Activated B cell treated with CpG ODN at 0.5 μM for 24 hours (primary cell): ENCODE measurements at regions of chr4 and their contacts with region 1.

Region 1: DNA sequence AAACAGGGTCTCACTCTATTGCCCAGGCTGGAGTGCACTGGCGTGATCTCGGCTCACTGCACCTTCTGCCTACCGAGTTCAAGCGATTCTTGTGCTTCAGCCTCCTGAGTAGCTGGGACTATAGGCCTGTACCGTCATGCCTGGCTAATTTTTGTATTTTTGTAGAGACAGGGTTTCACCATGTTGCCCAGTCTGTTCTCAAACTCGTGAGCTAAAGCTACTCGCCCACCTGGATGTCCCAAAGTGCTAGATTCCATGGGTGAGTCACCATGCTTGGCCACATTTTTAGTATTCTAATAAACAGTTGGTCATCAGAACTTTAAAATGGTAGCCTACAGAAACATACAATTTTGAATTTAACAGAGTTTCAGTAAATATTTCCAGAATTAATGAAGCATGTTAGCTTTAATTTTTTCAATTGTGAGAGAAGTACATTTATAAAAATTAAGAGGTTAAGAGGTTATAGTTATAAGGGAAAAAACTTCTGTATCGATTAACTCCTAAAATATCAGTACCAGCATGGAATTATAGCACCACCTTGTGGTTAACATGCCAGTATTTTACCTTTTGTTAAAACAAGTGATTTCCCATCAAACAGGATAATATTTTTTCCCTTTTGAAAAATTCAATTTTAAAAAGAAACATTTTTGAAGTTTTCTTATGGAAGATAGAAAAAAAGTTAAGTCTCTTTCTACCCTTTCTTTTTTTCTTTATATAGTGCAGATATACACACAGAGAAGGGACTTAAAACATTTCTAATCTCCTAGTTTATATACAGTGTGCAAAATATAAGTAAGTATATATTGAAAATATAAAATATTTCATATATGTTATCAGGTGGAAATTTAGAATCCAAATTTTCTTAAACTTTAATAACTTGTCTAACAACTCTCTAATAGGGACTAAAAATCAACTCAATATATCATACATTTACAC is 35.4 kb downstream of the CEP44 start:
- DNase-seq: no peak
- ATAC-seq: no peak
- H3K4me3 Mint-ChIP-seq: no peak overlapping the region
- H3K27ac Mint-ChIP-seq: no peak overlapping the region
- H3K4me1 Mint-ChIP-seq: no peaks in the 10 kb centered on the region
- H3K27me3 Mint-ChIP-seq: no peaks in the 10 kb centered on the region
- CTCF ChIP-seq: no peak

Region 2: GRCh38 chr4:174069848-174070330 is 249.2 kb before region 1 on chr4:
- CTCF ChIA-PET with region 1: no interaction called
- POLR2A ChIA-PET with region 1: no interaction called
- intact Hi-C with region 1: no loop called
- DNase-seq: no peak
- ATAC-seq: no peak
- H3K4me3 Mint-ChIP-seq: no peak overlapping the region
- H3K27ac Mint-ChIP-seq: no peak overlapping the region
- H3K4me1 Mint-ChIP-seq: no peaks in the 10 kb centered on the region
- H3K27me3 Mint-ChIP-seq: no peaks in the 10 kb centered on the region
- CTCF ChIP-seq: no peak

Region 3: GRCh38 chr4:174222266-174222872 is 96.7 kb before region 1 on chr4:
- CTCF ChIA-PET with region 1: interaction called, 8 read pairs
- POLR2A ChIA-PET with region 1: no interaction called
- intact Hi-C with region 1: loop called (anchors 1 kb)
- DNase-seq: no peak
- ATAC-seq: no peak
- H3K4me3 Mint-ChIP-seq: no peak overlapping the region
- H3K27ac Mint-ChIP-seq: no peak overlapping the region
- H3K4me1 Mint-ChIP-seq: peaks cover 9% of the 10 kb centered on the region
- H3K27me3 Mint-ChIP-seq: peaks cover 39% of the 10 kb centered on the region
- CTCF ChIP-seq: no peak

Region 4: GRCh38 chr4:174265916-174266315 is 53.2 kb before region 1 on chr4:
- CTCF ChIA-PET with region 1: no interaction called
- POLR2A ChIA-PET with region 1: no interaction called
- intact Hi-C with region 1: no loop called
- DNase-seq: no peak
- ATAC-seq: no peak
- H3K4me3 Mint-ChIP-seq: no peak overlapping the region
- H3K27ac Mint-ChIP-seq: no peak overlapping the region
- H3K4me1 Mint-ChIP-seq: peaks cover 14% of the 10 kb centered on the region
- H3K27me3 Mint-ChIP-seq: no peaks in the 10 kb centered on the region
- CTCF ChIP-seq: no peak

Region 5: DNA sequence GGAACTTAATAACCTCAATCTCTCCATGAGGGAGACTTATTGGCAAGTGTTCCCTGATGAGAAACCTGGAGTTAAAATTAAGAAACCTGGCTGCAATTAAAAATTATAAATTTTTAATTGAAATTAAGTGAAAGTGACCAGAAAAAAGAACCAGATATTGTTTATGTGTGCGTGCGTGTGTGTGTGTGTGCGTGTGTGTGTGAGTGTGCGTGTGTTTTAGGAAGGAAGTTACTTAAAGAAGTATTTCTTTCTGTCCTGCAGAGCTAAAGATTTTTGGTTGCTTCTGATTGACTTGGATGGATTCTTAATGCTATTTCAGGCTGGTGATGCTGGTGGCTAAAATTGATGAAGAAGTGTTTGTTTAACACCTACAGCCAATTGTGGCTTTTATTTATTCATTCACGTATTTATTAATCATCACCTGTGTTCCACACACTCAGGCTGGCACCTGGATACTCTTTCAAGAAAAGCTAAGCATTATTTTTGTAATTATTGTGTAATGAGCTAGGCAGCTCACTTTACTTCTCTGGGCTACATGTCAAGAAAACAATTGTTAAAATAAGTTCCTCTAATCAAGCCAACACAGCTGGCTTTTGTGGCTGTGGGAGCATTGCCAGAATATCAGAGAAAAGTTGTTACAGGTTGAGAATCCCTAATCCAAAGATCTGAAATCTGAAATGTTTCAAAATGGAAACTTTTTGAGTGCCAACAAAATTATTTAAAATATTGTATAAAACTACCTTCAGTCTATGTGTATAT is 33.1 kb after region 1 on chr4:
- CTCF ChIA-PET with region 1: no interaction called
- POLR2A ChIA-PET with region 1: no interaction called
- intact Hi-C with region 1: no loop called
- DNase-seq: no peak
- ATAC-seq: no peak
- H3K4me3 Mint-ChIP-seq: no peak overlapping the region
- H3K27ac Mint-ChIP-seq: no peak overlapping the region
- H3K4me1 Mint-ChIP-seq: no peaks in the 10 kb centered on the region
- H3K27me3 Mint-ChIP-seq: peaks cover 4% of the 10 kb centered on the region
- CTCF ChIP-seq: no peak